Activated CD4-positive, alpha-beta memory T cell treated with anti-CD3 and anti-CD28 coated beads for 36 hours (primary cell): ENCODE measurements at regions of chr15 and their contacts with region 1.

Region 1: DNA sequence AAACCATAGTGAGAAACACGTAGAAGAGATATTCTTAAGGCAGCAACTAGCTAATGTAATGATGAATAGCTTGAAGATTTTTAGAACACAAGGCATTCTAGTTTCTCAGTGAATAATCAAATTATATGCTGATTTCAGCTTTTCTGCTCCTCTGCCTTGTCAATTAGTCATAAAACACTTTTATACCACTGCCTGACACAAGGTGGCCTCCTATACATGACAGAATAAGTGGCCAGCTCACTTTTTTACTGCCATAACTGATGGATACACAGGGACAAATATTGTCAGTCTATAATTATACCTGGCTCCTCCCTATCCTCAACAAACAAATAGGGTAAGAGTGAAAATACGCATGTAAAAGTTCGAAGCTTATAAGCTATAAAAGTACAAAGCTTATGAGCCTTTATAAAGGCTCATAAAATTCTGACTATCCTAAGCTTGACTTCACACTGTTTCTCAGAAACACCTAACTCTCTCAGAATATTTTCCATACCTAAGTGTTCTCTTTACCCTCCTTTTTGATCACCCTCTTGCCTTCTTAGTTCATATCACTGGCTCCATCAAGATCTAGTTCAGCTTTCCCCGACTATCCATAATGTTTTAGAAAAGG is 81.6 kb downstream of the HERC1 start:
- DNase-seq: peak; percentile 14
- H3K4me3 Mint-ChIP-seq: no peak overlapping the region
- H3K27ac Mint-ChIP-seq: no peak overlapping the region
- H3K4me1 Mint-ChIP-seq: peaks cover 2% of the 10 kb centered on the region
- H3K27me3 Mint-ChIP-seq: no peaks in the 10 kb centered on the region

Region 2: DNA sequence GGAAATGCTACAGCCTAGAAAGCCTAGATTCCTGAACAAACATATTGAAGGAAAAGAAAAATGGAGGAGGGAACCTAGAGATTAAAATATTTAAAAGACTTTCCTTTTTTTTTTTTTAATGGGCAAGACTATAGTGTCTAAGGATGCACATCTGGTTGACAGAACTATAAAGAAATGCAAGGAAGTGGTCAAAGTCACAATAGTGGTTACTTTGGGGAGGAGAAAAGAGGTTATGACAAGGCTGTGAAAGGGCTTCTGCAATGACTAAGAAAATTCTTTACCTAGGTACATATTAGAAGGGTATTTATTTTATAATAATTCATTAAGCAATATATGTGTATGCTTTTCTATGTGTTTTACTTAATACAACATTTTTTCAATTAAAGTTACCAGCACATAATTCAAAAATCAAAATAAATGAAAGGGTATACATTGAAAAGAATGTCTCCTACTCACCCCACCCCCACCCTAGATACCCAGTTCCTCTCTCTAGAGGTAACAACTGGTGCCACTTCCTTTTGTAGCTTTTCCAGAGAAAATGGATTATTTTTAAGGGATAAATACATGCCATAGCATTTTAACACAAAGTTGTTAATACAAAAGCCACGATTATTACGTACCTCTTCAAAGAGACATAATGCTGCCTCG is 11.4 kb after region 1 on chr15:
- CTCF ChIA-PET with region 1: interaction called, 14 read pairs
- POLR2A ChIA-PET with region 1: no interaction called
- intact Hi-C with region 1: no loop called
- DNase-seq: no peak
- H3K4me3 Mint-ChIP-seq: no peak overlapping the region
- H3K27ac Mint-ChIP-seq: no peak overlapping the region
- H3K4me1 Mint-ChIP-seq: peaks cover 50% of the 10 kb centered on the region
- H3K27me3 Mint-ChIP-seq: no peaks in the 10 kb centered on the region

Region 3: DNA sequence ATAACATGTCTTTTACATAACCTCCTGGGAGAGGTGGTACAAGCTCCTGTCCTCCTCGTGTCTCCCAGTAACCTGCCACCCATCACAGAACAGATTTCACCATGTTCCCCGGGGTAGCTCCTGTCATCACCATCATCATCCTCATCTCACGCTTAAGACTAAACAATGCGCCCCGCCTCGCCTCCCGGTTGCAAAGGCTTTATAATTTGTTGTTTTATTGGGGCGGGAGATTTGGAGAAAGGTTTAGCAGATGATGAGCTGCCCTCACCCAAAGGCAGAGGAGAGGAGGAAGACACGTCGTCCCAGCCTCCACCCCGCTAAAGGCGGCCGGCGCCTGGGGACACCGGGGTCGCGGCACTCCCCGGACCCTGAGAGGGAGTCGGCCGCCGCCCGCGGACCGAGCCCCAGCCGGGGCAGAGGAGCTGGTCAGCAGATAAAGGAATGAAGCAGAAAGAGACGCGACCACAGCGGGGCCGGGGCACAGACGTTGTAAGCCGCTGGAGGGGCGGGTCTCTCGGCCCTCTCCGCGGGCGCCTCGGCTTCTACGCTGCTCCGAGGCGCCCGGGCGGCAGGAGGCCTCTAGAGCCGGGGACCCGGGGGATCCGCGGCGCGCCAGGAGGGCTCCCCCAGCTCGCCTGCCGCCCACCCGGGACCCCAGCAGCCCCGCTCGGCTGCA is 81.0 kb after region 1 on chr15:
- CTCF ChIA-PET with region 1: interaction called, 11 read pairs
- POLR2A ChIA-PET with region 1: no interaction called
- intact Hi-C with region 1: no loop called
- DNase-seq: peak; percentile 46
- H3K4me3 Mint-ChIP-seq: peak overlapping the region; percentile 96
- H3K27ac Mint-ChIP-seq: peak overlapping the region; percentile 66
- H3K4me1 Mint-ChIP-seq: peaks cover 44% of the 10 kb centered on the region
- H3K27me3 Mint-ChIP-seq: no peaks in the 10 kb centered on the region

Region 4: DNA sequence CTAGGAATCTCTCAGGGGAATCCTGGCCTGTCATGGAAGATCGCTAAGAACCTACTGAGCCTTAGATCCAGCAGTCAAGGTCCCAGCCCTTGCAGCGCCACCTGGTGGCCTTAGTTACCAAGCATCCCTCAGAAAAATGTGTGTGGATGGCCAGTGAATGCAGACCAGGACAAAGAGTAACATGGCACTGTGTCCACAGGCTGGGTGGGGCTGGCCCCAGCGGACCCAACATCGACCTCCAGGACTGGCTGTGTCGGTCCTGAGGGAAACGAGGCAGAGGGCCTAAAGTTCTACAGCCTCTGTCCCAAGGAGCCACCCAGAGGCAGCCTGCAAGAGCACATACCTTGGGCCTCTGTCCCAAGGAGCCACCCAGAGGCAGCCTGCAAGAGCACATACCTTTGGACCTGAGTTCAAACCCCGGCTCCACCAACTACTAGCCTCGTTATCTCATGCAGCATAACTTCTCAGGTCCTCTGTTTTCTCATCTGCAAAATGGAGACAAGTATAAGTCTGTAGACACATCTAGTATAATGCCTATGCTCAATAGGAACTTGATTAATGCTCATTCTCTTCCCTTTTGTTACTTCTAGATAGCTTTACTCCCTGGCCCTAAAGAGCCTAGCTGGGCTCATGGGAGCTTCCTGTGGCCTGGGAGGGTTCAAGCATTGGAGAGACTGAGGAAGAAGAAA is 139.0 kb after region 1 on chr15:
- CTCF ChIA-PET with region 1: interaction called, 124 read pairs
- POLR2A ChIA-PET with region 1: interaction called, 4 read pairs
- intact Hi-C with region 1: loop called (anchors 1 kb)
- DNase-seq: peak; percentile 85
- H3K4me3 Mint-ChIP-seq: no peak overlapping the region
- H3K27ac Mint-ChIP-seq: no peak overlapping the region
- H3K4me1 Mint-ChIP-seq: peaks cover 40% of the 10 kb centered on the region
- H3K27me3 Mint-ChIP-seq: no peaks in the 10 kb centered on the region

Region 5: DNA sequence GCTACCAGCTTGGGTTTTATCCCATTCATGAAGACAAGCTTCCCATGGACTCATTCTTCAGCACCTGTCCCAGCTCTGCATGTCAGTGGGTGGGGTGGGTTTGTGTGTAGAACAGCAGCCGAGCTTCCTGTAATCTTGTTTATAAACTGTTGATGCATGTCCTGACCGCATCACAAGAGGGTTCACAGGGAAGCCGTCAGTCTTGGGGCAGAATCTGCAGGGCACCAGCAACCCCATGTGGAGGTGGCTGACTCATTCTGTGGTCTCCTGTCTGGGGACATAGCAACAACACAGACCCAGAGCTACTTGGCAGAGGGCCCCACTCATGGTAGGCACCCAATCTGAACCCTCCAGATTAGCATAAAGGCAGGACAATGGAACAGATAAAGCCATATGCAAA is 258.5 kb after region 1 on chr15:
- CTCF ChIA-PET with region 1: interaction called, 13 read pairs
- POLR2A ChIA-PET with region 1: no interaction called
- intact Hi-C with region 1: no loop called
- DNase-seq: peak; percentile 92
- H3K4me3 Mint-ChIP-seq: peak overlapping the region; percentile 5
- H3K27ac Mint-ChIP-seq: peak overlapping the region; percentile 83
- H3K4me1 Mint-ChIP-seq: peaks cover 42% of the 10 kb centered on the region
- H3K27me3 Mint-ChIP-seq: no peaks in the 10 kb centered on the region